A549 (cell line): ENCODE measurements at regions of chr1 and their contacts with region 1.

Region 1: GRCh38 chr1:204363335-204364124 is 3.8 kb upstream of the PLEKHA6 start:
- DNase-seq: peak; percentile 44 to 70
- ATAC-seq: peak; percentile 54 to 70; a peak in 4 of 6 replicates
- H3K4me3 ChIP-seq: no peak overlapping the region
- H3K27ac ChIP-seq: peak overlapping the region; percentile 48 to 71; a peak in 4 of 6 replicates
- H3K4me1 ChIP-seq: peaks cover 31% of the 10 kb centered on the region
- CTCF ChIP-seq: peak; percentile 98
- EP300 ChIP-seq: no peak
- POLR2A ChIP-seq: no peak
- RAD21 ChIP-seq: peak; percentile 98

Region 2: DNA sequence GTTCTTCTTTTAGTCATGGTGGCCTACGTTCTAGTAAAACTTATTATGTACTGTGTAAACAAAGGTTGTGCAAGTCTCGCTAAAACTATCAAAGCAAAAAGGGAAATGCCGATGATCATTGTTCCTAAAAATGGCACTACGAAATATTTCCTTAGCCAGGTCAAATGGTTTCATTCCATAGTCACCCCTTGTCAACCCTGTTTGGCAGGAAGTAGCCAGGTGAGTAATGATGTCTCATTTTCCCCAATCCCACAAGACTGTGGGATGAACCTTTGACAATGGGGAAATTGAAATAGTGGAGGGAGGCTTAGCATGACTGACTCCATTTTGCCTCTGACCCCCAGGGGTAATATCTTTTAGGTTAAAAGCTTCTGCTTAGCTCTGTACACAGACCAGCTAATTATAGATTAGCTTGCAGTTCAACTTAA is 191.8 kb before region 1 on chr1:
- CTCF ChIA-PET with region 1: interaction called, 219 read pairs
- POLR2A ChIA-PET with region 1: no interaction called
- DNase-seq: peak; percentile 31 to 49
- ATAC-seq: peak in 1 of 2 experiments; percentile 49; a peak in 3 of 6 replicates
- H3K4me3 ChIP-seq: no peak overlapping the region
- H3K27ac ChIP-seq: no peak overlapping the region; a peak in 1 of 6 replicates
- H3K4me1 ChIP-seq: peaks cover 5% of the 10 kb centered on the region; the same call in 2 of the 3 replicates
- CTCF ChIP-seq: no peak
- EP300 ChIP-seq: no peak; a peak in 1 of 5 replicates
- POLR2A ChIP-seq: no peak
- RAD21 ChIP-seq: no peak

Region 3: GRCh38 chr1:204213668-204214662 is 149.6 kb before region 1 on chr1 and contains the start of gene GOLT1A:
- CTCF ChIA-PET with region 1: interaction called, 133 read pairs
- POLR2A ChIA-PET with region 1: no interaction called
- DNase-seq: peak; percentile 78 to 91
- ATAC-seq: peak; percentile 88 to 92
- H3K4me3 ChIP-seq: peak within 1 kb of the TSS; percentile 54
- H3K27ac ChIP-seq: peak within 1 kb of the TSS; percentile 73 to 88
- H3K4me1 ChIP-seq: peaks cover 6% of the 10 kb centered on the region; the same call in 2 of the 3 replicates
- CTCF ChIP-seq: peak; percentile 84
- EP300 ChIP-seq: no peak
- POLR2A ChIP-seq: no peak
- RAD21 ChIP-seq: peak; percentile 85 to 86
- polyA plus RNA-seq, gene GOLT1A: 6.4 and 6.8 TPM in 2 replicates

Region 4: GRCh38 chr1:204257954-204258752 is 105.4 kb before region 1 on chr1:
- CTCF ChIA-PET with region 1: interaction called, 840 read pairs
- POLR2A ChIA-PET with region 1: no interaction called
- DNase-seq: peak; percentile 74 to 85
- ATAC-seq: peak; percentile 86 to 93
- H3K4me3 ChIP-seq: no peak overlapping the region
- H3K27ac ChIP-seq: peak overlapping the region; percentile 7 to 31; a peak in 1 of 6 replicates
- H3K4me1 ChIP-seq: peaks cover 35% of the 10 kb centered on the region
- CTCF ChIP-seq: peak; percentile 83
- EP300 ChIP-seq: no peak
- POLR2A ChIP-seq: no peak
- RAD21 ChIP-seq: peak; percentile 90 to 92

Region 5: DNA sequence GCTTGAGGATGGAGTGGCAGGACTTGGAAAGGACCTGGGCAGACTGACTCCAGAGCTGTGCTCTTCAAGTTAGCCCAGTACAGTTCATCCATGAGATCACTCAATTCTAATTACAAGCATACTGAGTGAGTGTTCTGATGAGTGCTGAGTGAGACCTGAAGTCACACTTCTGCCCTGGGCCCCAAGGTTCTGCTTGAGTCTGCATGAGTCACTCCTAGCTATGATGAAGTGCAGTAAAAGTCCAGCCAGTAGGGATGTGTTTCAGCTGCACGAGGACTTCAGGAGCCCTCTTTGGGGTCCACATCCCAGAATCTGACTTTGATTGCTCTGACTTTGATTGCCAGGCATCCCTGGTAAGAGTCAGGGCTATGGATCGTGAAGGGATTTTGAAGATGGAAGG is 39.6 kb before region 1 on chr1:
- CTCF ChIA-PET with region 1: interaction called, 26 read pairs
- POLR2A ChIA-PET with region 1: no interaction called
- DNase-seq: peak; percentile 44 to 45
- ATAC-seq: peak; percentile 31 to 41; a peak in 2 of 6 replicates
- H3K4me3 ChIP-seq: no peak overlapping the region
- H3K27ac ChIP-seq: peak overlapping the region; percentile 46 to 66; a peak in 5 of 6 replicates
- H3K4me1 ChIP-seq: peaks cover 53% of the 10 kb centered on the region
- CTCF ChIP-seq: no peak
- EP300 ChIP-seq: no peak
- POLR2A ChIP-seq: no peak
- RAD21 ChIP-seq: no peak

Region 6: DNA sequence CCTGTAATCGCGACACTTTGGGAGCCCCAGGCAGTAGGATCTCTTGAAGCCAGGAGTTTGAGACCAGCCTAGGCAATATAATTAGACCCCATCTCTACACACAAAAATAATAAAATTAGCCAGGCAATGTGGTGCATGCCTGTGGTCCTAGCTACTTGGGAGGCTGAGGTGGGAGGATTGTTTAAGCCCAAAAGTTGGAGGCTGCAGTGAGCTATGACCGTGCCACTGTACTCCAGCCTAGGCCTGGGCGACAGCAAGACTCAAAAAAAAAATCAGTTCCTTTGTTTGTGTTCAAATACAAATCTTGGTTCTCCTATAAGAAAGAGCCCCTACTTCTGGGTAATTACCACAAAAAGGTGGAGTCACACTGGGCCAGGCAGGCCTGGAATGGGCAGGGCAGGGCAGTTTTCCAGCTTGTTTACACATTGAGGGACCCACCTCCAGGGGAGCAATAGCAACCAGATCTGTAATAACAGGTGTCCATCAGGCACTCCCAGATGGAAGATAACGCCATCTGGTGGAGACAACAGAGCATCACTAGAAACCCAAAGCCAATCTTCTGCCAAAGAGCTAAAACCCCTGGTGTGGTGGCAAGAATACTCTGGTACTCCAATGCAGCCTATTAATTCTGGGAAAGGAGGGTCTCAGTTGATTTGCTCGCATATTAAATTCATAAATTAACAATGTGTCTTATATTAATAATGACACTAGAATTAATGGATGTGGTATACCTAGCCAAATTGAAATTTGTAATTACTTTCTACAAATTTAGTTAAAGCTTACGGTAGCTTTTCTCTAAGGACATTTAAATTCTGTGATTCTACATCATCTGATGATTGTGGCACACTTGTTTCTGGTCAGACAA is 34.9 kb after region 1 on chr1:
- CTCF ChIA-PET with region 1: interaction called, 34 read pairs
- POLR2A ChIA-PET with region 1: no interaction called
- DNase-seq: peak; percentile 93 to 96
- ATAC-seq: peak; percentile 92 to 99
- H3K4me3 ChIP-seq: no peak overlapping the region
- H3K27ac ChIP-seq: no peak overlapping the region
- H3K4me1 ChIP-seq: peaks cover 7% of the 10 kb centered on the region; the same call in 2 of the 3 replicates
- CTCF ChIP-seq: peak; percentile 88
- EP300 ChIP-seq: no peak
- POLR2A ChIP-seq: no peak
- RAD21 ChIP-seq: peak; percentile 71 to 72

Region 7: DNA sequence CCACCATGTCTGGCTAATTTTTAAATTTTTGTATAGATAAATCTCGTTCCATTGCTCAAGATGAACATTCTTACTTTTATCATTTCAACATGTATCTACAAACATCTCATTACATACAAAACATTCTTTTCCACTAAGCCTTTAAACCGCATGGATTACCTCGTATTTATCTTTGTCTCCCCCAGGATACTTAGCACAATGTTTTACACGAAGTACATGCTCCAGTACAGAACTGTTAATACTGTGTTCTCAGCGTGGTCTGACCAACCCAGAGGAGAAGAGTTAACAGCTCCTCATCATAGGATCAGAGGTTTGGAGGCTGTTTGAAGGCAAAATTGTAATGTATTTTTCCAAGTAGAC is 123.7 kb after region 1 on chr1:
- CTCF ChIA-PET with region 1: no interaction called
- POLR2A ChIA-PET with region 1: no interaction called
- DNase-seq: no peak
- ATAC-seq: no peak
- H3K4me3 ChIP-seq: no peak overlapping the region
- H3K27ac ChIP-seq: no peak overlapping the region
- H3K4me1 ChIP-seq: peaks cover 28% of the 10 kb centered on the region
- CTCF ChIP-seq: no peak
- EP300 ChIP-seq: no peak
- POLR2A ChIP-seq: no peak
- RAD21 ChIP-seq: no peak

Region 8: GRCh38 chr1:204544321-204544720 is 180.8 kb after region 1 on chr1:
- CTCF ChIA-PET with region 1: no interaction called
- POLR2A ChIA-PET with region 1: no interaction called
- DNase-seq: no peak
- ATAC-seq: no peak
- H3K4me3 ChIP-seq: no peak overlapping the region
- H3K27ac ChIP-seq: no peak overlapping the region
- H3K4me1 ChIP-seq: no peaks in the 10 kb centered on the region
- CTCF ChIP-seq: no peak
- EP300 ChIP-seq: no peak
- POLR2A ChIP-seq: no peak
- RAD21 ChIP-seq: no peak

Region 9: GRCh38 chr1:204591594-204592051 is 228.1 kb after region 1 on chr1:
- CTCF ChIA-PET with region 1: no interaction called
- POLR2A ChIA-PET with region 1: no interaction called
- DNase-seq: no peak
- ATAC-seq: peak; percentile 48 to 74; a peak in 3 of 6 replicates
- H3K4me3 ChIP-seq: no peak overlapping the region
- H3K27ac ChIP-seq: no peak overlapping the region
- H3K4me1 ChIP-seq: peaks cover 15% of the 10 kb centered on the region; the same call in 2 of the 3 replicates
- CTCF ChIP-seq: no peak
- EP300 ChIP-seq: no peak
- POLR2A ChIP-seq: no peak
- RAD21 ChIP-seq: no peak; a peak in 1 of 5 replicates